ENCODE measurements at regions of chr5 and their contacts with region 1.

Region 1: GRCh38 chr5:36305571-36306326 is 4.0 kb upstream of the RANBP3L start:
- DNase-seq: peak; percentile 62
- ATAC-seq: peak; percentile 70 to 81

Region 2: DNA sequence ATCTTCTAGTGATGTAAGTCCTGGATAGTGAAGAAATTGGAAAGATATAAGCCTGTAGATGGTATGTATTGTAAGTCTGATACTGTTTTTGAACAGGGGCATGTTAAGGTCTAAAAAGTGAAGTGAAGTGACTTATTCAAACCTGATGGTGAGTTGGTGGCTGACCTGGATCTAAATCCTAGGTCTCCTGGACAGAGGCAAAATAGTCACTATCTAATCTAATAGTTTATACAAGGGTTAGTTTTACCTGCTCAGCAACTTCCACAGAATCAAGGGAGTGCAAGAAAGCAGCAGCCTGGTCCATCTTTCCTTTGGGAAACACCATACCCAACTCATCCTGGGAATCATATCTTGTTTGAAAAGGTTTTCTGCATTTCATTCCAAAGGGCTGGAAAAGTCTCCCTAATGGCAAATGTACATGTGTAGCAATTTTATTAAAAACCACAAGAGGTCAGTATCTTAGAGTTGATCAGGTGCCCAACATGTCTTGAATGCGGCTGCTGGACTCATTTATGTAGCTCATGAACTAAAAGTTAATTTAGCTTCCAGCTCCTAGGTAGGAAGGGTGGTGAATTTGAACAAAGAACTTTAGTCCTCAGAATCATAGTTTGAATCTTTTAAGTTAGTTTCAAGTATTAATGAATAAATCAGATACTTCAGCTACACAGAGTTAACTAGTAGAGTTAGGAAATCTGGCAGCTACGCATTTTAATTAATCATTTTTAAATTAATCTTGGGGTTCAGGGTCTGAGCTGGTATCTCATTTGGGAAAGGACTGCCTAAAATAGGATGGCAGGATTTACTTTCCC is 127.8 kb before region 1 on chr5:
- intact Hi-C with region 1: loop called in 1 of 2 experiments (anchors 5 kb)
- DNase-seq: no peak
- ATAC-seq: peak; percentile 51 to 57

Region 3: DNA sequence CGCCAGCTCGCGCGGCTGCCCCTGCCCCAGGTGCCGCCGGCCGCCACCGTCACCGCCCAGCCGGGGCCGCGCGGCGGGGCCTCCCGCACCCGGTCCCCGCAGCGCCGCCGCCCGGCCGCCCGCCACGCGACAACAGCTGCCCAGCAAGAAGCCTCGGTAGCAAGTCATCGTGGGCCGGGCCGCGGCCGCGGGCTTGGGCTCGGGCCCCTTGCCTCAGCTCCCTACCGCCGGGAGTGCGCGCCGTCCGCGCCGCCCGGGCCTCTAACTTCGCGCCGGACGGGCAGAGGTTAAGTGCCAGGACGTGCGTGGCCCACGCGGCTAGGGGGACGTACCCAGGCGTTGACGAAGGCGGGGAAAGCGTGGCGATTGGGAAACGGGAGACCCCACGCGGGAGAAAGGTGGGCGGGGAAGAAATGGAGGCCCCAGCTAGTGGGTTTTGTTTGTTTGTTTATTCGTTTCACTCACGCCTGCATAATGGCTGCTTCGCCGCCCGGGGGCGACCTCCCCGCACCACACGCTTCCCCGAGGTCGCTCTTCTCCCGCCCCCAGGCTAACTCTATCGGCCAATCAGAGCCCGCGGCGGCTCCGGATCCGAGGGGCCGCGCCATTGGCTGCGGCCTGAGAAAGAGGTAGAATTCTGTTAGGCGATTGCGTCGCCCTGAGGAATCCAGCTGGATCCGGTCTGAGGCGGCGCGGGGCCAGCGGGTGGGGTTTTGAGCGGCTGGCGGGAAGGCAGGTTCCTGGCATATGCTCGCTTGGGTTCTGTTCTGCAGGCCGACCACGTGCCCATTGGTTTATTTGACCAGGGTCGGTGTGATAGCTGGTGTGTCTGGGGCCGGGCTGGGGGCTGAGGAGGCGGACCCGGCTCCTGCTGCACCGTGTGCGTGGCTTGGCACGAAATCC is 63.9 kb before region 1 on chr5 and contains the start of gene NADK2:
- intact Hi-C with region 1: loop called in 1 of 2 experiments (anchors 10 kb)
- DNase-seq: peak; percentile 96
- ATAC-seq: peak; percentile 93 to 96
- total RNA-seq, gene NADK2: 27.7 to 31.6 TPM

Region 4: DNA sequence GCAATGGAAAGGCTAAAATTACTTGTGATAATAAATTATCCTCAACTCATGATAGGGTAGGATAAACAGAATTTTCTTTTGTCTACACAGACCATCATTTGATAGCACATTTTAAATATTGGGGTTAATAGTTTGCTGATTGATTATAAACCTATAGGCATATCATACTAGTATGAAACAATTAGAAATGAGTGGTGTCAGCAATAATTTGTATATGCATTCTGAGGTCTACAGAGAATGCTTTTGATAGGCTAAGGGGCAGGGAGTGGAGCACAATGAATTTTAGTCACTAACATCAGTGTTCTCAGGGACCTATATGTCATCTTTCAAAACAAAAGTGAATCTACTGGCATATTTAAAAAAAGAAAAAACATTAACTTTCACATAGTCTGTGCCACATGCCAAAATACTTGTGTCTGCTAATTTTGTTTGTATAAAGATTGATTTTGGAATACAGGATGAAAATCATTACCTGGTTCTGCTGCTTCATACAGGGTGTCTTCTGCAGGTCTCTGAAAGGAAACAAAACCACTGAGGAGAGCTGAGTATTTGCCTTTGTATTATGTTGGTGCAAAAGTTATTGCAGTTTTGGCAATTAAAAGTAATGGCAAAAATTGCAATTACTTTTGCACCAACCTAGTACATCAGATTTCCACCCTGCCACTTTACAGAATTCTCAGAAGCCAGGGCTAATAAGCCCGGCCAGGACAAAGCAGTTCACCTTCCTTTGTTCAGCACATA is 36.1 kb before region 1 on chr5:
- intact Hi-C with region 1: loop called in 1 of 2 experiments (anchors 5 kb)
- DNase-seq: no peak
- ATAC-seq: no peak

Region 5: DNA sequence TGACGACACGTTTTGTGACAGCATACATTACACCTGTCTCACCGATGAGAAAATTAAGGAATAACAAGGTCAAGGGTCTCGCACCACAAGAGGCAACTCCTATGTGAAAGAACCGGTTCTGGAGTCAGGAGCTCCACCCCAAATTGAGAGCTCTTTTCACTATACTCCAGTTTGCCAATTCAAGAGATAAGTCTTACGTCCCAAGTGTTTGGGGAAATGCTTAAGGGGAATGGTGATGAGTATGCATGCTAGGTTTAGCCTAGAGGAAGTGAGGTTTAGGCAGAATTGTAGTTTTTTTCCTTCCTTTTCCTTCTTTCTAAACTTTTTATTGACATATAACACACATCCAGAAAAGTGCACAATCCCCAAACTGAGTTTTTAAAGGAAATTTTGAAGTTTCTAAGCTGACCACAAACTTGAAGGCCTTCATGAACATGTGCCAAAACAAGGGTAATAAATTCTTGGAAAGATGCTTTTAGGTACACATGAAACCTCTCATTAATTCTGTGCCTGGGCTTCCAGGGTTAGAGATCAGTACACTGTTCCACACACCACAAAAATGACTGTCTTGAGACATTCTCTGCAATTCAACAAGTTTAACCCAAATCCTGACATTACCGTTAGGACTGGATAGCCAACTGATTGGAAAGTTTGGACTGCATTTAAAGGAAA is 173.0 kb after region 1 on chr5:
- intact Hi-C with region 1: no loop called
- DNase-seq: no peak
- ATAC-seq: no peak

Measured in left cardiac atrium (tissue), 4 donors.